GM12878 (cell line): ENCODE measurements at regions of chr7 and their contacts with region 1.

Region 1: GRCh38 chr7:35658602-35659201 is 36.2 kb downstream of the HERPUD2 start:
- DNase-seq: peak; percentile 26
- ATAC-seq: peak; percentile 71
- H3K4me3 ChIP-seq: no peak overlapping the region
- H3K27ac ChIP-seq: peak overlapping the region; percentile 44; the same call in 1 of the 2 replicates
- H3K4me1 ChIP-seq: peaks cover 8% of the 10 kb centered on the region; the same call in 1 of the 2 replicates
- H3K27me3 ChIP-seq: no peaks in the 10 kb centered on the region
- CTCF ChIP-seq: no peak
- EP300 ChIP-seq: no peak
- POLR2A ChIP-seq: no peak
- RAD21 ChIP-seq: no peak

Region 2: GRCh38 chr7:35676211-35676610 is 17.5 kb after region 1 on chr7:
- CTCF ChIA-PET with region 1: interaction called, 3 read pairs
- POLR2A ChIA-PET with region 1: no interaction called
- RAD21 ChIA-PET with region 1: no interaction called
- SMC1A ChIA-PET with region 1: interaction called, 13 read pairs
- in situ Hi-C with region 1: no loop called
- intact Hi-C with region 1: no loop called
- DNase-seq: no peak
- ATAC-seq: peak; percentile 62
- H3K4me3 ChIP-seq: no peak overlapping the region
- H3K27ac ChIP-seq: no peak overlapping the region
- H3K4me1 ChIP-seq: peaks cover 1% of the 10 kb centered on the region; the same call in 1 of the 2 replicates
- H3K27me3 ChIP-seq: no peaks in the 10 kb centered on the region
- CTCF ChIP-seq: peak in 2 of 3 experiments; percentile 17 to 21; a peak in 3 of 6 replicates
- EP300 ChIP-seq: no peak
- POLR2A ChIP-seq: no peak
- RAD21 ChIP-seq: peak; percentile 25; the same call in 1 of the 2 replicates

Region 3: DNA sequence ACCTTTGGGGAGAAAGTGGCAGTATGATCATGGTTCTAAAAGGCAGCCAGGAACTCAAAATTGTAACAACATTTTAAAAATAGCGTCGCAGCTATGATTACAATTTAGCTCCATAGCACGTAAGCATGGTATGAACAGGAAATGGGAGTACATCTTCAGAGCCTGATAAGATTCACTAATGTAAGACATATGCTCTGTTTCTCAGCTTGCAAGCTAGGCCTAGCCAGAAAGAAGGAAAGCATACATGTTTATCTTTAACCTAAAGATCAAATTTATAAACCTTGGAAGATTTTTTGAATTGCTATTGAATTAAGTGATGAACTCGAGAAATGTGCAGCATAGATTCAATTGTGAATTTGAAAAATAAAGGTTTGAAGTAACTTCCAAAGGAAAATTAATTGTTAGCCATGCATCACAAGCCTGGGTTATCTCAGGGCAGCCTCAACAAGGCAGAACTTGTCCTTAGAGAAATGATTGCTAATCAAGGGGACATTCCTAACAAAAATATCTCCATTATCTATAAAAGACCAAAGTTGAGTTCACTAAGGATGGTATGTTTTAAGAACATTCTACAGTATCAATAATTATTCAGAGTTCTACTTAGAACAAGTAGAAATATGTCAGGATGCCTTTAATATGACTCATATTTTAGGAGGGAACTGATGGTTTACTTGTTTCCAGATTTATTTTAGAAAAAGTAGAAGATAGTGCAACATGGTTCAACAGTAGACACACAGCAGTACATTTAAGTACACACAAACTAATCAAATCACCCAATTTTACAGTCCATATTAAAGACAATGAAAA is 103.4 kb after region 1 on chr7:
- CTCF ChIA-PET with region 1: no interaction called
- POLR2A ChIA-PET with region 1: no interaction called
- RAD21 ChIA-PET with region 1: no interaction called
- SMC1A ChIA-PET with region 1: no interaction called
- in situ Hi-C with region 1: no loop called
- intact Hi-C with region 1: no loop called
- DNase-seq: no peak
- ATAC-seq: no peak
- H3K4me3 ChIP-seq: no peak overlapping the region
- H3K27ac ChIP-seq: no peak overlapping the region
- H3K4me1 ChIP-seq: no peaks in the 10 kb centered on the region
- H3K27me3 ChIP-seq: no peaks in the 10 kb centered on the region
- CTCF ChIP-seq: no peak
- EP300 ChIP-seq: no peak
- POLR2A ChIP-seq: no peak
- RAD21 ChIP-seq: no peak

Region 4: DNA sequence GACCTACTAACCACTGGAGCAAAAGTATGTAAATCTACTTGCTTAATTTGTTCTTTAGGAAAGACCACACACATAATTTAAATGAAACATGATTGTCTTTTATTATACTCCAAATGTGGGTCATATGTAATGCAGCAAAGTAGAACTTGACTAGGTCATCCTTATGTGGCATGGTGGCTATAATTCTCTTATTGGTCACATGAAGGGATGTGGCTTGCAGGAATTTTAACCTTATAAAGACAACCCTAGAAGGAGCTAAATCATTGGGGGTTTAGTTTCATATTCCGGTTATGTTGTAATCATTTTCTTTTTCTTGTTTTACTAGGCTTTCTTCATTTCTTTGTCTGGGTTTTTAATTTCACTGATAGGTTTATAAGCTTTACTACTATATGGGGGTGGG is 236.0 kb after region 1 on chr7:
- CTCF ChIA-PET with region 1: no interaction called
- POLR2A ChIA-PET with region 1: no interaction called
- RAD21 ChIA-PET with region 1: no interaction called
- SMC1A ChIA-PET with region 1: no interaction called
- in situ Hi-C with region 1: no loop called
- intact Hi-C with region 1: no loop called
- DNase-seq: no peak
- ATAC-seq: no peak
- H3K4me3 ChIP-seq: no peak overlapping the region
- H3K27ac ChIP-seq: no peak overlapping the region
- H3K4me1 ChIP-seq: no peaks in the 10 kb centered on the region
- H3K27me3 ChIP-seq: no peaks in the 10 kb centered on the region
- CTCF ChIP-seq: no peak
- EP300 ChIP-seq: no peak
- POLR2A ChIP-seq: no peak
- RAD21 ChIP-seq: no peak